ENCODE measurements at regions of chr7 and their contacts with region 1.

Region 1: GRCh38 chr7:38215735-38216670 is 38.0 kb downstream of the STARD3NL start:
- DNase-seq: peak; percentile 43 to 91 (median 69)
- ATAC-seq: peak; percentile 78 to 91 (median 89)
- H3K4me3 ChIP-seq: no peak overlapping the region
- H3K4me3 Mint-ChIP-seq: peak overlapping the region in 2 of 3 donors; percentile 24 to 34
- H3K27ac ChIP-seq: peak overlapping the region; percentile 68
- H3K27ac Mint-ChIP-seq: peak overlapping the region; percentile 93 to 95
- H3K4me1 ChIP-seq: peaks cover 0 to 41% of the 10 kb centered on the region in 2 experiments
- H3K4me1 Mint-ChIP-seq: peaks cover 19 to 44% (median 43%) of the 10 kb centered on the region in 3 donors
- H3K27me3 ChIP-seq: no peaks in the 10 kb centered on the region
- H3K27me3 Mint-ChIP-seq: no peaks in the 10 kb centered on the region

Region 2: GRCh38 chr7:38107486-38107893 is 108.5 kb before region 1 on chr7:
- CTCF ChIA-PET with region 1: interaction called, 25 to 41 read pairs
- POLR2A ChIA-PET with region 1: no interaction called
- DNase-seq: peak; percentile 21 to 80 (median 55)
- ATAC-seq: peak; percentile 71 to 80 (median 78)
- H3K4me3 ChIP-seq: no peak overlapping the region
- H3K4me3 Mint-ChIP-seq: no peak overlapping the region
- H3K27ac ChIP-seq: no peak overlapping the region
- H3K27ac Mint-ChIP-seq: no peak overlapping the region
- H3K4me1 ChIP-seq: no peaks in the 10 kb centered on the region
- H3K4me1 Mint-ChIP-seq: peaks cover 0 to 2% (median 0%) of the 10 kb centered on the region in 3 donors
- H3K27me3 ChIP-seq: peaks cover 0 to 4% of the 10 kb centered on the region in 2 experiments
- H3K27me3 Mint-ChIP-seq: peaks cover 6 to 8% of the 10 kb centered on the region in 2 donors

Region 3: DNA sequence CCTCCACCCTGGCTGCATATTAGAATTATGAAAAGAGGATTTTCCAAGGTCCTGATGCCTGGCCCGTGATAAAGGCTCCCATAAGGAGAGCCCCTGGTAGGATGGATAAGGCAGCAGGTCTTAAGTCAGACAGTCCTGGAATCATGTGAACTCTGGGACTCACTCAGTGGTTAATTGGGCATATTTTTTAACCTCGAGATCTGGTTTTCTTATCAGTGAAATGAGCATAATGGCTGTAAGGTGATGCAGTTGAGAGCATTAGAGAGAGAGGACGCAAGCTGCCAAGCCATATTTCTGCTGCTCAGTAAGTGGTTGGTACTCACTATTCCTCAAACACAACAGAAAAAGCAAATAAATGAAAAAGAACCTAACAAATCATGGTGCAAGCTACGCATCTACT is 19.6 kb after region 1 on chr7:
- CTCF ChIA-PET with region 1: interaction called in 1 of 2 experiments, 11 read pairs
- POLR2A ChIA-PET with region 1: no interaction called
- DNase-seq: no peak
- ATAC-seq: no peak
- H3K4me3 ChIP-seq: no peak overlapping the region
- H3K4me3 Mint-ChIP-seq: no peak overlapping the region
- H3K27ac ChIP-seq: peak overlapping the region; percentile 84
- H3K27ac Mint-ChIP-seq: peak overlapping the region; percentile 65 to 94
- H3K4me1 ChIP-seq: peaks cover 9 to 55% of the 10 kb centered on the region in 2 experiments
- H3K4me1 Mint-ChIP-seq: peaks cover 35 to 76% (median 69%) of the 10 kb centered on the region in 3 donors
- H3K27me3 ChIP-seq: no peaks in the 10 kb centered on the region
- H3K27me3 Mint-ChIP-seq: no peaks in the 10 kb centered on the region

Region 4: DNA sequence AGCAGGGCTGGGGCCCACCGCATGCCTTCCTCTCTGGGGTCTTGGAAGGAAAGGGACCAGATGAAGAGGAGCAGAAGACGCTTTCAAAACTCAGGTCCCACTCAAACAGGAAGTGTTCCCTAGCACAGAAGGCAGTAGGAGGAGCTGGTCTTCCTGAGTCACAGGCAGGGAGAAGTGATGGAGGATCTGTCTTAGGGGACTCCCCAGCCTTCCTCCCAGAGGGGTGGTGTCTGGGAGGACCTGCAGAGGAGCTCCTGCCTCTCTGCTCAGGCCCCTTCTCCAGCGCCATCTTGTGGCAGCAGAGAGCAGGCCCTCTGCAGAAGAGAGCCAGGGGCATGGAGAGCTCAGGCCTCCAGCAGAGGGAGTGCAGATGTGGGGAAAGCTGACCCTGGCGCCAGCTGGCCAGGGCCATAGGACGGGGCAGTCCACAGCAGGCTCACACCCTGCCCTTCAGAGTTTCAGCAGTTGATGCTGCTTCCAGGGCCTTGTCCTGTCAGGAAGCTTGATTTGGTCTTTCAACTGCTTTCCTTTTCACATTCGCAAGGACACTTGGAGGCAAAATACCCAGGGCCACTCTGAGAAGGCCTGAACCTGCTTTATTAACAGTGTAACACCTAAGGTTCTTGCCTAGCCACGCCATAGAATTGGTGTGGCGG is 119.6 kb after region 1 on chr7:
- CTCF ChIA-PET with region 1: interaction called, 26 to 173 read pairs
- POLR2A ChIA-PET with region 1: no interaction called
- DNase-seq: peak in 34 of 35 experiments; percentile 59 to 87 (median 74)
- ATAC-seq: peak; percentile 79 to 91 (median 84)
- H3K4me3 ChIP-seq: peak overlapping the region in 1 of 2 donors; percentile 38
- H3K4me3 Mint-ChIP-seq: peak overlapping the region; percentile 75 to 83 (median 80)
- H3K27ac ChIP-seq: peak overlapping the region; percentile 57
- H3K27ac Mint-ChIP-seq: peak overlapping the region; percentile 87 to 95
- H3K4me1 ChIP-seq: peaks cover 15 to 25% of the 10 kb centered on the region in 2 experiments
- H3K4me1 Mint-ChIP-seq: peaks cover 42 to 57% (median 50%) of the 10 kb centered on the region in 3 donors
- H3K27me3 ChIP-seq: no peaks in the 10 kb centered on the region
- H3K27me3 Mint-ChIP-seq: no peaks in the 10 kb centered on the region

Region 5: GRCh38 chr7:38369816-38370493 is 154.0 kb after region 1 on chr7:
- CTCF ChIA-PET with region 1: interaction called, 104 to 161 read pairs
- POLR2A ChIA-PET with region 1: interaction called, 3 to 4 read pairs
- DNase-seq: peak; percentile 42 to 89 (median 73)
- ATAC-seq: peak in 3 of 4 experiments; percentile 55 to 58 (median 58)
- H3K4me3 ChIP-seq: no peak overlapping the region
- H3K4me3 Mint-ChIP-seq: peak overlapping the region; percentile 40 to 58 (median 46)
- H3K27ac ChIP-seq: peak overlapping the region; percentile 59
- H3K27ac Mint-ChIP-seq: peak overlapping the region; percentile 91
- H3K4me1 ChIP-seq: peaks cover 27 to 50% of the 10 kb centered on the region in 2 experiments
- H3K4me1 Mint-ChIP-seq: peaks cover 69 to 75% (median 71%) of the 10 kb centered on the region in 3 donors
- H3K27me3 ChIP-seq: no peaks in the 10 kb centered on the region
- H3K27me3 Mint-ChIP-seq: no peaks in the 10 kb centered on the region

Region 6: DNA sequence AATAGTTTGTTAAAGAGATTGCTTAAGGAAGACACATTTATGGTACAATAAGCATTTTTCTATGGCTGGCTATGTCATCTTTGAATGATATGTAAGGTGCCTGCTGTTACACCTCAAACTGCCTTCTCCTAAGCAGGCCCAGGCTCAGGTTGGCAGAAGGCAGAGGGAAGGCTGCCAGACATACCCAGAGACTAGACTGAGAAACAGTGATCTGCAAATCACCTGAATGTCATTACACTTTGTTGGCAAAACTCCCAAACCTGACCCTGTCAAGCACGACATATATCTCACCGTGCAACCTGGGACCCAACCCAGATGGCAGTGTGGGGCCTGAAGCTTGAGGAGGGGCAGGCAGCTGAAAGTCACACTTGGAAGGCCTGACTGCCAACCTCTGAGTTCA is 194.1 kb after region 1 on chr7:
- CTCF ChIA-PET with region 1: no interaction called
- POLR2A ChIA-PET with region 1: no interaction called
- DNase-seq: no peak
- ATAC-seq: no peak
- H3K4me3 ChIP-seq: no peak overlapping the region
- H3K4me3 Mint-ChIP-seq: no peak overlapping the region
- H3K27ac ChIP-seq: no peak overlapping the region
- H3K27ac Mint-ChIP-seq: no peak overlapping the region
- H3K4me1 ChIP-seq: peaks cover 0 to 12% of the 10 kb centered on the region in 2 experiments
- H3K4me1 Mint-ChIP-seq: peaks cover 17 to 33% (median 23%) of the 10 kb centered on the region in 3 donors
- H3K27me3 ChIP-seq: no peaks in the 10 kb centered on the region
- H3K27me3 Mint-ChIP-seq: peaks cover 0 to 2% of the 10 kb centered on the region in 2 donors

Region 7: DNA sequence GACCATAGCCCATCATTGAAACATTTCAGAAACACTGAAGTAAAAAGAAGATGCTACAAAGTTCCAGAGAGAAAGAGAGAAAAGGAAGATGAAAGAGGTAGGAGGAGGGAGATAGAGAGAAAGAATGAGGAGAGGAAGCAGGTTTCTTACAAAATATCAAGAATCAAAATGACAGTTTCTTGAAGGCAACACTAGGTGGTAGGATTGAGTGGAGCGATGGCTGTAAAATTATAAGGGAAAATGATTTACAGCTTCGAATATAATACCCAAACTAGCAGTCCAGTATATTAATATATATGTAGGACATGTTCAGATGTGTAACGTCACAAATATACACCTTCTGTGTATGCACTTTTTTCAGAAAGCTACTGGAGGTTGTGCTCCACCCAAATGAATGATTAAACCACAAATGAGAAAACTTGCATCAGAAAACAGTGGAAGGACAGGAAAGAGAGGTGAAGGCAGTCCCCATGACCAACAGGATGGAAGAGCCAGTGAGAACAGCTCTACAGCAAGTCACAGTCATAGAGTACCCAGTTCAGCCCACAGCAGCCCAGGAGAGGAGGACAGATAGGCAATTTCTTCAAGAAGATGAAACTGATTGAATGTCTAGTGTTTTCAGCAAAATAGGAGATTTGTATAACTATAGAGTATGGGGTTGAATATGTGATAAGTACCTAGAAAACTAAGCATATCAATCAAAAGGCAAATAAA is 208.9 kb after region 1 on chr7:
- CTCF ChIA-PET with region 1: no interaction called
- POLR2A ChIA-PET with region 1: no interaction called
- DNase-seq: peak in 1 of 35 experiments; percentile 9
- ATAC-seq: peak; percentile 31 to 42 (median 40)
- H3K4me3 ChIP-seq: no peak overlapping the region
- H3K4me3 Mint-ChIP-seq: peak overlapping the region in 1 of 3 donors; percentile 51
- H3K27ac ChIP-seq: peak overlapping the region; percentile 46
- H3K27ac Mint-ChIP-seq: peak overlapping the region; percentile 59 to 87
- H3K4me1 ChIP-seq: peaks cover 7 to 46% of the 10 kb centered on the region in 2 experiments
- H3K4me1 Mint-ChIP-seq: peaks cover 35 to 62% (median 54%) of the 10 kb centered on the region in 3 donors
- H3K27me3 ChIP-seq: no peaks in the 10 kb centered on the region
- H3K27me3 Mint-ChIP-seq: no peaks in the 10 kb centered on the region

Measured in T-cell (primary cell).